ENCODE measurements at regions of chr21 and their contacts with region 1.

Region 1: GRCh38 chr21:42117229-42117966 is 46.3 kb downstream of the UMODL1 start:
- DNase-seq: peak; percentile 72
- H3K4me3 Mint-ChIP-seq: no peak overlapping the region
- H3K27ac Mint-ChIP-seq: no peak overlapping the region
- H3K4me1 Mint-ChIP-seq: peaks cover 27% of the 10 kb centered on the region
- H3K27me3 Mint-ChIP-seq: peaks cover 65% of the 10 kb centered on the region

Region 2: GRCh38 chr21:41816220-41817165 is 300.9 kb before region 1 on chr21:
- CTCF ChIA-PET with region 1: interaction called, 33 read pairs
- POLR2A ChIA-PET with region 1: no interaction called
- DNase-seq: peak; percentile 55
- H3K4me3 Mint-ChIP-seq: no peak overlapping the region
- H3K27ac Mint-ChIP-seq: no peak overlapping the region
- H3K4me1 Mint-ChIP-seq: no peaks in the 10 kb centered on the region
- H3K27me3 Mint-ChIP-seq: no peaks in the 10 kb centered on the region

Region 3: DNA sequence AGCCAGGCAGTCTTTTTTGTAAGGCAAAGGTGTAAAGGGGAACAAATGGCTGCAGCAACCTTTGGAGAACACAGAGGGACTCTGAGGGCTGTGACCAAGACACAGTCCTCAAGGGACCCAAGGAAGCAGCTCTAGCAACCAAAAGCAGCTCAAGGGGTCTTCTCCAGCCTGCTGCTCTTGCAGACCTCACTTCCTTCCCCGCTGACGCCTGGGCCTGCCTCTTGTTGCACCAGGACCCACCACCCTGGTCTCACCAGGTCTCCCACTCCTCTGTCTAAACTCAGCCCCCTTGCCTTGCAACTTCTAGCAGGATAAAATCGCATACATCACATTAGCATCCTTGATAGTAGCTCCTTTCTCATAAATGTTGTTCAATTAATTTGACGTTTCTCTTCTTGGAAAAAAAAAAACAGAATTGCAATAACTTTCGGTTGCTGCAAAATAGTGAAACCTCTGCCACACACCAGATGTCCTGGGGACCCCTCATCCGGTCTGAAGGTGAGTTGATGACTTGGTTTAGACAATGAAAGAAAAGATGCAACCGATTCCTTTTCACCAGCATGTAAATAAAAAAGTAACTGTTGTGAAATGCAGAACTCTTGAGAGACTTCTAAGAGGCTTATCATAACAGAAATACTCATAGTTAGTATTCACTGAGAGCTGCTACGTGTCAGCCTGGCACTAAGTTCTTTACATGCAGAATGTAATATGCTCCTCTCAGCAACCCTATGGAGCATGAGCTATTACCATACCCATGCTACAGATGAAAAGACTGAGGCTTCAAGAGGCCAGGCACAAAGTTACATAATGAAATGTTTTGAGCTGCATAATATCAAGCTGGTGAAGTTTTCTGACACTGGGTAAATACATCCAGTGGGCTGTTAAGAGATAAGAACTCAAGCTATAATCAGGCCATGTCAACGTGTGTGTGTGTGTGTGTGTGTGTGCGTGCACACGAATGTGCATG is 12.2 kb after region 1 on chr21:
- CTCF ChIA-PET with region 1: interaction called, 27 read pairs
- POLR2A ChIA-PET with region 1: interaction called, 6 read pairs
- DNase-seq: no peak
- H3K4me3 Mint-ChIP-seq: no peak overlapping the region
- H3K27ac Mint-ChIP-seq: no peak overlapping the region
- H3K4me1 Mint-ChIP-seq: peaks cover 11% of the 10 kb centered on the region
- H3K27me3 Mint-ChIP-seq: peaks cover 3% of the 10 kb centered on the region

Measured in activated CD4-positive, alpha-beta memory T cell treated with anti-CD3 and anti-CD28 coated beads, Interleukin-2, amount 10 ng/mL, durations not matched to agents 7 days and 5 days (primary cell).